ENCODE measurements at regions of chr9 and their contacts with region 1.

Region 1: DNA sequence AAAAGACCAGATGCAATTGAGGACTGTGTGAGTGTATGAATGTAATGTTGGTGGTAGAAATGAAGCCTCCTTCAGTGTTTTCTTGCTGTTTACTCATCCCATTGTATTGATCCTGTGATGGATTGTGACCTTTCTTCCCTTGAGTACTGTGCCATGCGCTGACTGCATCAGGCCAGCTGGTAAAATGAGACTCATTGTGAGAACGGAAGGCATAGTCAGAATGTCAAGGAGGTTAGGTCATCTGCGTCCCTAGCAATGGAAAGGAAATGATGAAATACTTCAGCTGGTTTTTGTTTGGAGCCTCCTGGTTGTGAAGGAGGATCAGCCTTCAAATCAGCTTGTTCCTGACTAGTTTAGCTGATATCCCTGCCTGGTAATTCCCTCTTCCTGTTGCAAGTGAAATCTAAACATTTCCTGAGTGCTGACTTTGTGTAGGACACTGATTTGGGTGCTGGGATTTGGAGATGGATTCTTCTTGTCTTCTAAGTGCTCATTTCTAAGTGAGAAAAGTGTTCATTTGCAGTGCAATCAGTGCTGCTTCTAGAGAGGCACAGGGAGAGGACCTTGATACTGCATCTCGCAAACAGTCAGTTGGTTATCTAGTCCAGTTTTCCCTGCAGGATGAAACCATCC is 35.5 kb downstream of the TNFSF8 start:
- DNase-seq: peak; percentile 56
- H3K4me3 ChIP-seq: peak overlapping the region; percentile 22
- H3K27ac ChIP-seq: peak overlapping the region; percentile 93
- H3K4me1 ChIP-seq: peaks cover 71% of the 10 kb centered on the region
- CTCF ChIP-seq: no peak

Region 2: DNA sequence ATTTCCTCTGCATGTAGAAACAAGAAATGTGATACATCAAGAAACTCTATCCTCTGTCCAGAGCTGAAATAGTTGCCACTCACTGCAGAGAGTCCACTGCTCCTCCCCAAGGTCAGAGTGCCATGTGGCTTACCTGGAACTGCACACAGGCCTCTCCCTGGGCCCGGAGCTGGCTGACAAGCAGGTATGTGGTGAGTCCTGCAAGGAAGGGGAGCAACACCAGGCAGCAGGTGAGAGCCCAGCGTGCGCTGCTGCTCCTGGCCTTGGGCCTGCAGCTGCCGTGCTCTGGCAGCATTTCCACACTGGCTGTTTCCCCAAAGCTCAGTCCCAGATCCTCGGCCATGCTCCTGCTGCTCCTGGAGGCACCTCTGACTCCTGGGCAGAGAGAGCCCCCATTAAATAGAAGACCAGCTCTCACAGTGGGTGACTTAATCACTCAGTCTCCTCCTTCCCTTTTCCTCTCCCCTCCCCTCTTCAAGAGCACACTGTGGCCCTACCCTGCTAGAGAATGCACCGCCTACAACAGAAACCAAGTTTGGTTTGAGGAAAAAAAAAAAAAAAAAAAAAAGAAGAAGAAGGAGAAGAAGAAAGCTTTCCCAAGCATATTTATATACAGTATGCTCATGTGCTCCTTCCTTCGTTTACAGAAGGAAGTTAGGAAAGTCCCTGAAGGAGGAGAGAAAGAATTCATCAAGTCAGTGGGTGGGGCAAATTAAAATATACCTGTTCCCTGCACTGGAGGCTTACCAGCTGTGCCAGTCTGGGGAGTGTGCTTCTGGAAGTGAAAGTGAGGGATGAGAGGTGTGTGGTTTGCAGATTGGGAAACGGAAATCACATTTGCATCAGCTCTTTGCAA is 89.0 kb before region 1 on chr9 and contains the start of gene TNFSF15:
- CTCF ChIA-PET with region 1: no interaction called
- POLR2A ChIA-PET with region 1: interaction called, 4 read pairs
- intact Hi-C with region 1: loop called (anchors 5 kb)
- DNase-seq: peak; percentile 50
- H3K4me3 ChIP-seq: peak within 1 kb of the TSS; percentile 32
- H3K27ac ChIP-seq: no peak within 1 kb of the TSS
- H3K4me1 ChIP-seq: peaks cover 37% of the 10 kb centered on the region
- CTCF ChIP-seq: no peak
- total RNA-seq, gene TNFSF15: 0.08 TPM in 1 of 2 replicates, not detected in the other

Region 3: GRCh38 chr9:114919611-114920010 is 24.7 kb after region 1 on chr9:
- CTCF ChIA-PET with region 1: interaction called, 5 read pairs
- POLR2A ChIA-PET with region 1: interaction called, 20 read pairs
- intact Hi-C with region 1: no loop called
- DNase-seq: no peak
- H3K4me3 ChIP-seq: peak overlapping the region; percentile 3
- H3K27ac ChIP-seq: peak overlapping the region; percentile 44
- H3K4me1 ChIP-seq: peaks cover 80% of the 10 kb centered on the region
- CTCF ChIP-seq: no peak

Region 4: GRCh38 chr9:115085773-115086377 is 191.0 kb after region 1 on chr9:
- CTCF ChIA-PET with region 1: no interaction called
- POLR2A ChIA-PET with region 1: no interaction called
- intact Hi-C with region 1: no loop called
- DNase-seq: no peak
- H3K4me3 ChIP-seq: no peak overlapping the region
- H3K27ac ChIP-seq: no peak overlapping the region
- H3K4me1 ChIP-seq: no peaks in the 10 kb centered on the region
- CTCF ChIP-seq: no peak

Measured in OCI-LY7 (cell line).